GM10248 (cell line): ENCODE measurements at regions of chr17 and their contacts with region 1.

Region 1: GRCh38 chr17:64420143-64420971 is 28.6 kb upstream of the MILR1 start:
- DNase-seq: peak; percentile 66
- CTCF ChIP-seq: peak; percentile 80

Region 2: DNA sequence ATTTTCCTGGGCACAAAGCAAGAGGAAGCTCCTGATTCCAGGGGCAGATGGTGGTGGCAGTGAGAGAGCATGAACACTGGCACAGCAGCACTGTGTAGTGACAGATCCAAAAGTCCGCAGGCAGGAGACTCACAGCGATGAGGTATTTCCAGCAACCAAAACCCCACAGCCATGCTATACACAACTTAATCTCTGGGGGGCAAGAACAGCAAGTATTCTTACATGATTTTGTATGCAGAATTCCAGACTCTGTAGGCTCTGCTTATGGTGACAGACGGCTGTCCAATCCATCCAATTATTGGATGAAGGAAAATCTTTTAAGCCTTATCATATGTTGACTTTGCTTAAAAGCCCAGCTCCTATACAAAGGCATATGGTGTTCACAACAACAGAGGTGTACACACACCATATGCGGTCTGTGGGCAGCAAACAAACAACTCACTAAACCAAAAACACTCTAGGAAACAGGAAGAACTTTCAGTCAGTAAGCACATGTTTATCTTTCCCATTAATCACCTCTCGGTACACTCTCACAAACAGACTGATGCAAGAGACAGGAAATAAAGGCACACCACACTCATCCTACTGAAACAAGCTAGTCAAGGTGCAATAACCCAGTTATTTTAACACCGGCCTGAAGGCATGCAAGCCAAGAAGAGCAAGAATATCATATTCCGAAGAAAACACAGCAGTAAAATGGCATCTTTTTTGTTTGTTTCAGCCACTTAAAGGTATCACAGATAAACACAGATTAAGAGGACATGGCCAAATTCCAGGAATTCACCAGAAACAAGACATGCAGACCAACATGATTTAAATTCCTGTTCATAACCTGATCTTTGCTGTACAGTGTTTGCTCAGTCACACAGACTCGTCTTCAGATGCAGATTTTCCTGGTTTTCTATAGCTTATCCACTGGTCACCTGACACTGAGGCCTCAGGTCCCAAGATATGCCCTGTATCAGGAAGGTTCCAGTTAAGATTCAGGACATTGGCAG is 338.3 kb before region 1 on chr17:
- CTCF ChIA-PET with region 1: no interaction called
- POLR2A ChIA-PET with region 1: no interaction called
- DNase-seq: no peak
- CTCF ChIP-seq: no peak

Region 3: GRCh38 chr17:64291254-64291851 is 129.0 kb before region 1 on chr17:
- CTCF ChIA-PET with region 1: interaction called, 17 read pairs
- POLR2A ChIA-PET with region 1: no interaction called
- DNase-seq: no peak
- CTCF ChIP-seq: no peak

Region 4: GRCh38 chr17:64326395-64327054 is 93.8 kb before region 1 on chr17:
- CTCF ChIA-PET with region 1: interaction called, 125 read pairs
- POLR2A ChIA-PET with region 1: no interaction called
- DNase-seq: no peak
- CTCF ChIP-seq: no peak

Region 5: GRCh38 chr17:64431534-64431933 is 11.2 kb after region 1 on chr17:
- CTCF ChIA-PET with region 1: interaction called, 23 read pairs
- POLR2A ChIA-PET with region 1: no interaction called
- DNase-seq: no peak
- CTCF ChIP-seq: no peak

Region 6: GRCh38 chr17:64459284-64459747 is 39.0 kb after region 1 on chr17:
- CTCF ChIA-PET with region 1: interaction called, 24 read pairs
- POLR2A ChIA-PET with region 1: no interaction called
- DNase-seq: no peak
- CTCF ChIP-seq: no peak

Region 7: GRCh38 chr17:64491034-64491859 is 70.9 kb after region 1 on chr17:
- CTCF ChIA-PET with region 1: interaction called, 96 read pairs
- POLR2A ChIA-PET with region 1: interaction called, 5 read pairs
- DNase-seq: no peak
- CTCF ChIP-seq: peak; percentile 71

Region 8: GRCh38 chr17:64653325-64653984 is 233.1 kb after region 1 on chr17:
- CTCF ChIA-PET with region 1: interaction called, 52 read pairs
- POLR2A ChIA-PET with region 1: no interaction called
- DNase-seq: no peak
- CTCF ChIP-seq: no peak